B cell (primary cell): ENCODE measurements at regions of chr12 and their contacts with region 1.

Region 1: GRCh38 chr12:45575823-45576475 is 153.6 kb upstream of the ARID2 start:
- DNase-seq: peak; percentile 77
- ATAC-seq: peak; percentile 71
- H3K4me3 ChIP-seq: peak overlapping the region in 1 of 5 experiments; percentile 10
- H3K4me3 Mint-ChIP-seq: peak overlapping the region; percentile 44
- H3K27ac ChIP-seq: peak overlapping the region; percentile 5 to 63
- H3K27ac Mint-ChIP-seq: peak overlapping the region; percentile 85
- H3K4me1 ChIP-seq: peaks cover 32 to 33% of the 10 kb centered on the region in 2 donors
- H3K4me1 Mint-ChIP-seq: peaks cover 39% of the 10 kb centered on the region
- H3K27me3 ChIP-seq: no peaks in the 10 kb centered on the region
- H3K27me3 Mint-ChIP-seq: peaks cover 4% of the 10 kb centered on the region
- CTCF ChIP-seq: no peak

Region 2: GRCh38 chr12:45536284-45536683 is 39.7 kb before region 1 on chr12:
- CTCF ChIA-PET with region 1: no interaction called
- POLR2A ChIA-PET with region 1: no interaction called
- intact Hi-C with region 1: no loop called
- DNase-seq: no peak
- ATAC-seq: no peak
- H3K4me3 ChIP-seq: no peak overlapping the region
- H3K4me3 Mint-ChIP-seq: no peak overlapping the region
- H3K27ac ChIP-seq: no peak overlapping the region
- H3K27ac Mint-ChIP-seq: no peak overlapping the region
- H3K4me1 ChIP-seq: no peaks in the 10 kb centered on the region
- H3K4me1 Mint-ChIP-seq: no peaks in the 10 kb centered on the region
- H3K27me3 ChIP-seq: no peaks in the 10 kb centered on the region
- H3K27me3 Mint-ChIP-seq: peaks cover 21% of the 10 kb centered on the region
- CTCF ChIP-seq: no peak

Region 3: GRCh38 chr12:45601888-45602287 is 25.9 kb after region 1 on chr12:
- CTCF ChIA-PET with region 1: no interaction called
- POLR2A ChIA-PET with region 1: no interaction called
- intact Hi-C with region 1: no loop called
- DNase-seq: no peak
- ATAC-seq: no peak
- H3K4me3 ChIP-seq: no peak overlapping the region
- H3K4me3 Mint-ChIP-seq: no peak overlapping the region
- H3K27ac ChIP-seq: no peak overlapping the region
- H3K27ac Mint-ChIP-seq: no peak overlapping the region
- H3K4me1 ChIP-seq: no peaks in the 10 kb centered on the region
- H3K4me1 Mint-ChIP-seq: no peaks in the 10 kb centered on the region
- H3K27me3 ChIP-seq: peaks cover 0 to 4% (median 0%) of the 10 kb centered on the region in 4 experiments
- H3K27me3 Mint-ChIP-seq: peaks cover 12% of the 10 kb centered on the region
- CTCF ChIP-seq: no peak

Region 4: DNA sequence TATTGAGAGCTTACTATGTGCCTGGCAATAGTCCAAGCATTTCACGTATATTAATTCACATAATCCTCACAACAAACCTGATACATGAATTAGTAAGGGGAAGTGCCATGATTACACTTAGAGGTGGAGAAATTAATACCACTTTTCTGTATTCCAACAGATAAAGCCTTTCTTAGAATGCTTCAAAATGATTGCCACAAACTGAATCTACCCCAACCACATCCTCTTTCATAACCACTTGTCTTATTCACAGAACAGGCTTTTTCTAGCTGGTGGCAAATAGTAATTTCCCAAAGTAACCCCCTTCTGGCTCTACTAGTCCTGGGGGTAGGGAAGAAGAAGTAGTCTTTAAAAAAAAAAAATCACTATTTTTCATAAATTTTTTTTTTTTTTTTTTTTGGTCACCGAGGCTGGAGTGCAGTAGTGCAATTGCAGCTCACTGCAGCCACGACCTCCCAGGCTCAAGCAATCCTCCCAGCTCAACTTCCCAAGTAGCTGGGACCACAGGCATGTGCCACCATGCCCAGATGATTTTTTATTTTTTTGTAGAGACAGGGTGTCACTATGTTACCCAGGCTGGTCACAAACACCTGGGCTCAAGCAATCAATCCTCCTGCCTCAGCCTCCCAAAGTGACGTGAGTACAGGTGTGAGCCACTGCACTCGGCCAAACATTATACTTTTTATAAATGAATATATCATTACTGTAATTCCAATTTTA is 94.6 kb after region 1 on chr12:
- CTCF ChIA-PET with region 1: no interaction called
- POLR2A ChIA-PET with region 1: no interaction called
- intact Hi-C with region 1: loop called (anchors 5 kb)
- DNase-seq: peak; percentile 55
- ATAC-seq: peak; percentile 55
- H3K4me3 ChIP-seq: no peak overlapping the region
- H3K4me3 Mint-ChIP-seq: peak overlapping the region; percentile 2
- H3K27ac ChIP-seq: no peak overlapping the region
- H3K27ac Mint-ChIP-seq: no peak overlapping the region
- H3K4me1 ChIP-seq: peaks cover 27 to 28% of the 10 kb centered on the region in 2 donors
- H3K4me1 Mint-ChIP-seq: peaks cover 23% of the 10 kb centered on the region
- H3K27me3 ChIP-seq: no peaks in the 10 kb centered on the region
- H3K27me3 Mint-ChIP-seq: no peaks in the 10 kb centered on the region
- CTCF ChIP-seq: no peak